Activated CD8-positive, alpha-beta T cell treated with anti-CD3 and anti-CD28 coated beads, Interleukin-2, amount 10 ng/mL, durations not matched to agents 7 days and 5 days (primary cell): ENCODE measurements at regions of chr5 and their contacts with region 1.

Region 1: DNA sequence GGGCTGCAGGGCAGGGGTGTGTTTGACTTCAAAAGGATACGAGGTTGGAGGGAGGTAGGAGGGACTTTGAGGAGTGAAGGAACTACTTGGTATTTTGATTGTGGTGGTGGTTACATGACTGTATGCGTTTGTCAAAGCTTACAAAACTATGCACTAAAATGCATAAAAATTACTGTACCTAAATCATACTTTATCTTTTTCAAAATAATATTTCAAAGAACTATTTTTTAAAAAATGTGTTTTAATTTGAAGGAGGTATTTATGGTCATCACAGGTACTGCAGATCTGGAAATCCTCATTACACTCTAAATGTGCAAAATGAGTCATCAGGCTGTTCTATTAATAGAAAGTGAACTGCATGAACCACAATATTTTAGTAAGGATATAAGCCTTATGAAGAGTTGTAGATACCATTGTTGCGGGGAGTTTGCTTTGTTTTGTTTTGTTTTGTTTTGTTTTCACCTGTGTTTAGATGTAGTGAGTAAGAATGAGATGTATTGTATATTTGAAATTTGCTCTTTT is 116.9 kb downstream of the ARRDC3 start:
- DNase-seq: no peak
- ATAC-seq: peak; percentile 80
- H3K4me3 Mint-ChIP-seq: no peak overlapping the region
- H3K27ac Mint-ChIP-seq: no peak overlapping the region
- H3K4me1 Mint-ChIP-seq: peaks cover 31% of the 10 kb centered on the region
- H3K27me3 Mint-ChIP-seq: peaks cover 3% of the 10 kb centered on the region

Region 2: GRCh38 chr5:91280362-91281269 is 14.4 kb after region 1 on chr5:
- CTCF ChIA-PET with region 1: interaction called, 15 read pairs
- POLR2A ChIA-PET with region 1: interaction called, 6 read pairs
- DNase-seq: peak; percentile 85
- ATAC-seq: peak; percentile 93
- H3K4me3 Mint-ChIP-seq: peak overlapping the region; percentile 79
- H3K27ac Mint-ChIP-seq: peak overlapping the region; percentile 76
- H3K4me1 Mint-ChIP-seq: peaks cover 22% of the 10 kb centered on the region
- H3K27me3 Mint-ChIP-seq: peaks cover 2% of the 10 kb centered on the region